A549 (cell line): ENCODE measurements at regions of chr9 and their contacts with region 1.

Region 1: GRCh38 chr9:126690431-126691350 is 77.0 kb downstream of the LMX1B start:
- DNase-seq: peak; percentile 51 to 76
- ATAC-seq: peak; percentile 51 to 87; a peak in 4 of 6 replicates
- H3K4me3 ChIP-seq: no peak overlapping the region
- H3K27ac ChIP-seq: no peak overlapping the region
- H3K4me1 ChIP-seq: no peaks in the 10 kb centered on the region
- CTCF ChIP-seq: peak; percentile 71
- EP300 ChIP-seq: no peak
- POLR2A ChIP-seq: no peak
- RAD21 ChIP-seq: peak; percentile 37 to 49; a peak in 4 of 5 replicates

Region 2: DNA sequence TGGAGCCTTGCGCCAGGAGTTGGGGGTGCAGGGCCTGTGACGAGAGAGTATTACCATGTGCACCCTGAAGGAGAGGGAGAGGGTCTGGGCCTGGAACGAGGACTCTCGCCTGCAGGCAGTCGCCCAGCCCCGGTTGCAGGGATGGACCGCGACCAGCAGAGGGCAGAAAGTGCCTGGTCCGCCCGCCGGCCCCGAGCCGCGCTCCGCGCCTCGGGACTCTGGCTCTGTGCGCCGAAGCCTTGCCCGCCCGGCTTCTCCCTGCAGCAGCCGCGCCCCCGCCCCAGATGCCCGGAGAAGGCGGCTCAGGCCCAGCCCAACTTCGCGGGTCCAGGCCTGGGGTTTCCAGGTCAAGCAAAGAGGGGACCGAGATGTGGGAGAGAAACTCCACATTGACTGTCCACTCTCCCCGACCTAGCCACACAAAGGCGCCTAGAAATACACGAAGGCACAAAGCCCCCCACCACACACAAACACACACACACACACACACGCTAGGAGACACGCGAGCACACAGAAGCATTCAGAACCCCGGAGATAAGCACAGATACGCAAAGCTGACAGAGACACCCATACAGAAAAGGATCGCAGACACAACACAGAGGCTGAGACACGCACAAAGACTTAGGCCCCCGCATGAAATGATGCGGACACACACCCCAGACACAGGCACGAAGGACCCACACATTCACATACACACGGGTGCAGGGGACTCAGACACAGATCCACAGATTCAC is 78.9 kb before region 1 on chr9:
- CTCF ChIA-PET with region 1: interaction called, 46 read pairs
- POLR2A ChIA-PET with region 1: no interaction called
- DNase-seq: peak; percentile 75 to 80
- ATAC-seq: peak; percentile 74 to 94
- H3K4me3 ChIP-seq: peak overlapping the region; percentile 79
- H3K27ac ChIP-seq: no peak overlapping the region; a peak in 1 of 6 replicates
- H3K4me1 ChIP-seq: peaks cover 17% of the 10 kb centered on the region
- CTCF ChIP-seq: peak; percentile 76
- EP300 ChIP-seq: no peak
- POLR2A ChIP-seq: no peak
- RAD21 ChIP-seq: peak; percentile 58 to 77

Region 3: DNA sequence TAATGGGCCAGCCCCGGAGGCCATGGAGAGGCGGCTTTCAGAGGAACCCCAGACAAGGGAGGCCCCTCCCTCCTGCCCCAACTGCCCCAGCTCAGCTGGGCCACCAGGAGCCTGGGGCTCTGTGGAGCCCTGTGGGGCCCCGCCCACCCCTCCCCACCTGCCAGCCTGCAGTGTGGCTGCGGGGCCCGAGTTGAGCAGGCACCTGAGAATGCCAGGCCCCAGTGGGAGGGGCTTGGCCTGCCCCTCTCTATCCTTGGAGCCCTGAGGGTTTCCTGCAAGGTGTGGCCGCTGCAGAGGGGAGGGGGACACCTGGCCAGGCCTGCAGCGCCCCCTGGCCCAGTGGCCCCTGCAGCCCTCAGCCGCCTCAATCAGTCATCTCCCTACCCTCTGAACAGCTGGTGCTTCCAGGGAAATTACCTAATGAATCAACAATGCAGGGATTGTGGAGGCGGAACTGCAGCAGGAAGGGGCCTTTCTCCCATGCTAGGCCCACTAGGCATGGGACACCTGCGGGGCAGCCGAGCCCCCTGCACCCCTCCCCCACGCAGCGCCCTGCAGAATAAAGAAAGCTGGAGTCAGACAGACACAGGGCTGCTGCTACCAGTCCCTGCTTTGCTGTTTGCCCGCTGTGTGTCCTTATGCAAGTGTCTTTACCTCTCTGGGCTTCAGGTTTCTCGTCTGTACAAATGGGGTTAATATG is 29.0 kb before region 1 on chr9:
- CTCF ChIA-PET with region 1: interaction called, 27 read pairs
- POLR2A ChIA-PET with region 1: no interaction called
- DNase-seq: peak in 1 of 2 experiments; percentile 13
- ATAC-seq: peak in 1 of 2 experiments; percentile 27; a peak in 3 of 6 replicates
- H3K4me3 ChIP-seq: no peak overlapping the region
- H3K27ac ChIP-seq: no peak overlapping the region
- H3K4me1 ChIP-seq: no peaks in the 10 kb centered on the region
- CTCF ChIP-seq: no peak
- EP300 ChIP-seq: no peak
- POLR2A ChIP-seq: no peak
- RAD21 ChIP-seq: no peak

Region 4: DNA sequence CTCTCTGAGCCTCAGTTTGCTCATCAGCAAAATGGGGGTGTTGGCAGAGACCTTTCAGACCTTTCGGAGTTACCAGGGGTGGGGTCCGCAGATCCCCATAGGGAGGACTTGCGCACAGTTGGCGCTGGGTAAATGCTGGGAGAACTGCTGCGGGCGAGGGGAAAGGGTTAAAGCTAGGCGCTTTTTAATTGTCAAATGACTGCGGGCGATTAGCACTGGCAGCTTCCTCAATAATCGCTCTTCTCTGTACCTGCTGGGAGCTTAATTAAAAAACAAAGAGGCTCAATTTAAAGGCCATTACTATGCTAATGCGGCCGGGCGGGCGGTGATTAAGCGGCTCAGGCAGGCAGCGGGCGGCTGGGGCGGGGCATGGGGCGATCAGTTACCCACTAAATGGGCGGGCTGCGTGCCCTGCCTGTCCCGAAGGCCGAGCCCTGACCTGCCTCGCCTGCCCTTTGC is 14.0 kb before region 1 on chr9:
- CTCF ChIA-PET with region 1: interaction called, 58 read pairs
- POLR2A ChIA-PET with region 1: no interaction called
- DNase-seq: no peak
- ATAC-seq: no peak
- H3K4me3 ChIP-seq: no peak overlapping the region
- H3K27ac ChIP-seq: no peak overlapping the region
- H3K4me1 ChIP-seq: no peaks in the 10 kb centered on the region
- CTCF ChIP-seq: no peak
- EP300 ChIP-seq: no peak
- POLR2A ChIP-seq: no peak
- RAD21 ChIP-seq: no peak